Calu3 (cell line): ENCODE measurements at regions of chrX and their contacts with region 1.

Region 1: GRCh38 chrX:136215559-136215958 is 35.6 kb downstream of the MAP7D3 start:
- DNase-seq: no peak
- H3K4me3 Mint-ChIP-seq: no peak overlapping the region
- H3K27ac Mint-ChIP-seq: no peak overlapping the region
- H3K4me1 Mint-ChIP-seq: peaks cover 10% of the 10 kb centered on the region
- H3K27me3 Mint-ChIP-seq: no peaks in the 10 kb centered on the region
- CTCF ChIP-seq: no peak

Region 2: DNA sequence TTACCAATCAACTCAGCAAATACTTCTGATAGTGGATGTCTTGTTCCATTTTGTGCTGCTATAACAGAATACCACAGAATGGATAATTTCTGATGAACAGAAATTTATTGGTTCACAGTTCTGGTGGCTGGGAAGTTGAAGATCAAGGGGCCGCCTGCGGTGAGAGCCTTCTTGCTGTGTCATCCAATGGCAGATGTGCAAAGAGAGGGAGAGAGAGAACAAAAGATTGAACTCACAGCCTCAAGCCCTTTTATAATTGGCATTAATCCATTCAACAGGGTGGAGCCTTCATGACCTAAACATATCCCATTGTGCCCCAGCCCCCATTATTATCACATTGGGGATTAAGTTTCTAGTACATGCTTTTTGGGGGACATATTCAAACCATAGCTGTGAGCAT is 171.3 kb after region 1 on chrX:
- CTCF ChIA-PET with region 1: interaction called, 14 read pairs
- intact Hi-C with region 1: no loop called
- DNase-seq: no peak
- H3K4me3 Mint-ChIP-seq: no peak overlapping the region
- H3K27ac Mint-ChIP-seq: no peak overlapping the region
- H3K4me1 Mint-ChIP-seq: no peaks in the 10 kb centered on the region
- H3K27me3 Mint-ChIP-seq: peaks cover 20% of the 10 kb centered on the region
- CTCF ChIP-seq: no peak

Region 3: DNA sequence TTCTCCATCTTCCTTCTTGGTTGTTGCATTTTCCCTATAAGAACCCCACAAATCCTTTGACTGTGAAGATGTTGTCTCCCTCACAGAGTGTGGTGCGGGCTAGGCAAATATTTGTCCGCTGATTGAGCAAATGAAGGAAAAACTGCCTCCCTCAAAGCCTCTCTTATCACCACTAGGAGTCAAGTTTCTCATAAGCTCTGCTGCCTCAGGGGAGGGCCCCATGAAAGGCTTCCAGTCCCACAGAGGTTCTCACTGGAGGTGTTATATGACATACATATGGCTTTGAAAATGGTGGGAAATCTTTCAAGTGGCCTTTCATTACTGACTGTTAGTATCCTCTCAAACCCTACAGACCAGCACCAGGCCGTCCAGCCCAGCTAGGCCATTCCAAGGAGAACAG is 325.7 kb after region 1 on chrX:
- CTCF ChIA-PET with region 1: no interaction called
- intact Hi-C with region 1: no loop called
- DNase-seq: no peak
- H3K4me3 Mint-ChIP-seq: no peak overlapping the region
- H3K27ac Mint-ChIP-seq: no peak overlapping the region
- H3K4me1 Mint-ChIP-seq: peaks cover 16% of the 10 kb centered on the region
- H3K27me3 Mint-ChIP-seq: no peaks in the 10 kb centered on the region
- CTCF ChIP-seq: no peak